ENCODE measurements at regions of chr15 and their contacts with region 1.

Region 1: DNA sequence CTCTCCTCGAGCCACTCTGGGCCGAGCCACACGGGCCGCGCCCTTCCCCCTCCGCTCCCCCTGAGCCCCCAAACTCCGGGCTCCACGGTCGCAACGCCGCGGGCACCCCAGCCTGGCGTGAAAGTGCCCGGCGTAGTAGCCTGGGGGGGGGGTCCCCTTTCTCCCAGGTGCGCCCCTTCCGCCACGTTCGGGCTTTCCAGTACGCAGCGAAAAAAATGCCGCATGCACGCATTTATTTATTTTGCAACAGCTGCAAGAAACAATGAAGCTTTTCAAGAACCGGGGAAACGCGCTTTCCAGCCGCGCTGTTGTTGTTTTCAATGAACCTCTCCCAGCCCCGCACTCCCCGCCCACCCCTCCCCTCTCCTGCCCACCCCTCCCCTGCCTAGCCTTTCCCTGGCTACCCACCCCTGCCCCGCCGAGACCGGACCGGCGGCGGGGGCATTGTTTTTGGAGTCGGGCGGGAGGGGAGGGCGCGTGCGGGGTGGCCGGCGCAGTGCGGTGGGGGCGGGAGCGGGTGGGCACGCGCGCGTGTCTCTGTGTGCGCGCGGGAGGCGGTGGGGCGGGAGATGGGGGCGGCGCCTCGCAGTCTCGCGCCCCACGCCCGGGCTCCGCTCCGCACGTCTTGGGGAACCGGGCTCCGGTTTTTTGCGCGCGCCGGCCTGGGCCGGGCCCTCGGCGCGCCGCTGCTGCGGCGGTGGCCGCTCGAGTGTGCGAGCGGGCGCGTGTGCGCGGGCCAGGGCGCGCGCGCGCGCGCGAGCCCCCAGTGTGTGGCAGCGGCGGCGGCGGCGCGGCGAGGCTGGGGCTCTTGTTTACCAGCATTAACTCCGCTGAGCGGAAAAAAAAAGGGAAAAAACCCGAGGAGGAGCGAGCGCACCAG is at the start of gene IGF1R:
- DNase-seq: peak; percentile 85
- H3K4me3 Mint-ChIP-seq: peak within 1 kb of the TSS; percentile 87
- H3K27ac Mint-ChIP-seq: peak within 1 kb of the TSS; percentile 94
- H3K4me1 Mint-ChIP-seq: peaks cover 25% of the 10 kb centered on the region
- H3K27me3 Mint-ChIP-seq: no peaks in the 10 kb centered on the region
- total RNA-seq, gene IGF1R: 25.6 to 26.6 TPM

Region 2: DNA sequence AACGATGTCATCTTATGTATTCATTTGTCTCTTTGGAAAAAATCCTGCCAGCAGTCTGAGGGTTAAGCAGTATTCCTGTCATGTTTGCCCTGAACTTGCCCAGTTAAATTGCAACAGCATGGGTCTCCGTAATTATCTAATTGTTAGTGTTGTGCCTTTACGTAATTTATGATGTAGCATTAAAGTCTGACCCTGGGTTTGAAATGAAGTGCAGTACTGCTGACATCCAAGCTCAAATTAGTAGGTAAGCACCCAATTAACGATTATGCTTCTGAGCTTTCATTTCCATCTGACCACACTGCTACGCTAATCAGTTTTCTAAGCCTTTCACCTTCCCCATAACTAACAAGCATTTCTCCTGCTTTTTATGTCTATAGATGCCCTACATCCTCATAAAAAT is 445.8 kb before region 1 on chr15:
- CTCF ChIA-PET with region 1: no interaction called
- intact Hi-C with region 1: no loop called
- DNase-seq: no peak
- H3K4me3 Mint-ChIP-seq: no peak overlapping the region
- H3K27ac Mint-ChIP-seq: no peak overlapping the region
- H3K4me1 Mint-ChIP-seq: no peaks in the 10 kb centered on the region
- H3K27me3 Mint-ChIP-seq: peaks cover 7% of the 10 kb centered on the region

Region 3: GRCh38 chr15:98442379-98442833 is 205.6 kb before region 1 on chr15:
- CTCF ChIA-PET with region 1: no interaction called
- intact Hi-C with region 1: loop called (anchors 2 kb)
- DNase-seq: peak; percentile 83
- H3K4me3 Mint-ChIP-seq: no peak overlapping the region
- H3K27ac Mint-ChIP-seq: no peak overlapping the region
- H3K4me1 Mint-ChIP-seq: peaks cover 2% of the 10 kb centered on the region
- H3K27me3 Mint-ChIP-seq: peaks cover 17% of the 10 kb centered on the region

Region 4: DNA sequence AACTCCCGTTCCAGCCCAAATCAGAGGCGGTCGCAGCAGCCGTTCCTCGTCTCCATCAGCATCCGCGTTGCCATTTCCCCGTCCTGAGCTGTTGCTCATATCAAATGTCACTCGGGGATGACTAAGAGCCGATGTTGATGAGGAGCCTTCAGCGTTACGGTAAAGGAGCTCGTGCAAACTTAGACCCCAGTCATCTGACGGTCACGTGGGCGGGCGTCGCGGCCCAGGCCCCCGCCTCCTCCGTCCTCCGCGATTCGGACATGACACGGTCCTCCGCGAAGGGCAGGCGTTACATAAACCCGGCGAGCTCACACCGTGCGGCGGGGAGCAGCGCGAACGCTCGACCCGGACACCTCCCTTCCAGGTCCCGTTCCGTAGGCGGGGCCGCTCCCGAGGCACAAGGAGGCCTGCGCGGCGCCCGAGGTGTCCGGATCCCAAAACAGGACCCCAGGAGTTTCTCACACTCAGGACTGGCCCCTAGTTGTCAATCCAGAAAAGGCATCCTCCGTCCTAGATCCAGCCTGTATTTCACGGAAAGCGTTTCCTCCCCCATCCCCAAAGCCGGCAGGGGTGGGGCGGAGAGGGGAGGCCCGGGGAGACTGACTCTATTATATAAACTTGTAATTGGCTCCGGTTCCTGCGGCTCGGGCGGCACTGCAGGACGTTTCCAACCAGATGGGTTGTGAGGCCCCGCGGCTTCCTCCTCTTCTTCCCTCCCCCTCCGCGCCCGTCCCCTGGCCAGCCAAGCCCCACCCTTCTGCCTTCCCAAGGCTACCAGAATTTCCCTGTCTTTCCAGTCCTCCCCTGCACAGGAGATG is 99.7 kb before region 1 on chr15:
- CTCF ChIA-PET with region 1: interaction called, 3 read pairs
- intact Hi-C with region 1: loop called (anchors 1 kb)
- DNase-seq: peak; percentile 83
- H3K4me3 Mint-ChIP-seq: peak overlapping the region; percentile 90
- H3K27ac Mint-ChIP-seq: peak overlapping the region; percentile 83
- H3K4me1 Mint-ChIP-seq: peaks cover 16% of the 10 kb centered on the region
- H3K27me3 Mint-ChIP-seq: peaks cover 28% of the 10 kb centered on the region

Region 5: DNA sequence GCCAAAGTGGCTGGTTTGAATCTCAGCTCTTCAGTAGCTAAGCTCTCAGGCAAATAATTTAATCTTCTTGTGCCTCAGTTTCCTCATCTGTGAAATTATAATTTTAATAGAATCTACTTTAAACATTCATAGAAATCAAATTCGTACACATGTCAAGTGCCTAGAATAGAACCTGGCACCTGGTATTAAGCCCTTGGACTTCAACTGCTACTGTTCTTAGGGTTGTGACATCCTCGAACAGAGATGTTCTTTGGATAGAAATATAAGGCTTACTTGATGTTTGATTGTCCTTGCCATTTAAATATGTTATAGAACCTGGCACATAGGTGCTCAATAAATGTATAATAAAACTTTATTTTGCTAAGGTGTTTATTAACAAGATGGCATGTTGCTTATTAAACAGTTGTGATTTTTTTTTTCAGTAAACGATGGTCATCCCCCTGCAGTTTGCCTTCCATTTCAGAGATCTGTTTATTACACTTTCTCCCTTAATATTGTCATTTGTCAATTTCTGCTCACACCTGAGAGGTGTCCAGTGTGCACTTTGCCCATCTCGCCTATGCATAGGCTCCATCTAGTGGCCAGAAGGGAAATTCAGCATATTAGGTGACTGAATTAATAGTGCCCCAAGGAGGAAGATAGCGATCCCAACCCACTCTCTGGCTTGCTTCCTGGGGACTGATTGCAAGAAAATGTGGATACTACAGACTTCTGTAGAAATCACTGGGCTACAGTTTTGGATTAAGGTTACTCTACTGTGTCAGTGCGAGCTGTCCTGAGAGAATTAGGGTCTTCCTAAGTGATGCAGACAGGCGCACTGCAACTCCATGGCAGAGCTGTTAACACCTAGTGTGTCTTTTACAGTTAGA is 11.1 kb after region 1 on chr15:
- CTCF ChIA-PET with region 1: interaction called, 7 read pairs
- intact Hi-C with region 1: loop called (anchors 1 kb)
- DNase-seq: peak; percentile 45
- H3K4me3 Mint-ChIP-seq: no peak overlapping the region
- H3K27ac Mint-ChIP-seq: no peak overlapping the region
- H3K4me1 Mint-ChIP-seq: peaks cover 52% of the 10 kb centered on the region
- H3K27me3 Mint-ChIP-seq: no peaks in the 10 kb centered on the region

Region 6: DNA sequence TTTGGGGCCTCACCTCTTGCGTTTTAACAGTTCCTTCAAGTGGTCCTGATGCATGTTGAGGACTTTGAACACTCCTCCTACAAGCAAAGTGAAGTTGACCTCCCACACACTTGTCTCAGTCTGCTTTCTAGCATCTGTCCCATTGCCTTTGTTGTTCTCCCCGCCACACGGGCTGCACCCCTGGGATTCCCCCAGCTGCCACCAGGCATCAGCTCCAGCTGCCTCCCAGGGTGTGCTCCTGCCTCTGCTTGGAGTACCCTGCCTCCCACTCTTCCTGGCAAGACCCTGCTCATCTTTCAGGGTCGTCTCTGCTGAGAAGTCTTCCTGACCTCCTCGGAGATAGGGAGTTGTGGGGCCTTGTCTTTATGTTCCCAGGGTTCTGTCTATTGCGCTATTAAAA is 52.5 kb after region 1 on chr15:
- CTCF ChIA-PET with region 1: no interaction called
- intact Hi-C with region 1: no loop called
- DNase-seq: peak; percentile 24
- H3K4me3 Mint-ChIP-seq: no peak overlapping the region
- H3K27ac Mint-ChIP-seq: no peak overlapping the region
- H3K4me1 Mint-ChIP-seq: peaks cover 62% of the 10 kb centered on the region
- H3K27me3 Mint-ChIP-seq: no peaks in the 10 kb centered on the region

Region 7: DNA sequence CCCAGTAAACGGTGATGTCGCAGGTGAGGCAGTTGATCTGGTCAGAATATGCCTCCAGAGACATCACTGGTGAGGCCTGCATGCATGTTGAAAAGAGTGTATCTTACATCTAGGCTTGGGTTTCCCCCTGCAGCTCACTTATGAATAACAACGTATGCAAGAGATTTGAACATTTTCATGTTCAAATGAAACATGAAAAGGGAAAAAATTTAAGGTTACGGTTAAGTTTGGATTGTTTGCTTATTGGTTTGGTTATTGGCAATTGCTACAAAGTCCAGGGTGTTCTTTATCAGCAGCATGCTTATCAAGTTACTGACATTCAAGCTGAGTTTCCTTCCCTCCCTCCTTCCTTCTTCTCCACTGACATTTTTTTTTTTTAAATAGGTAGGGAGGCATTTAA is 123.5 kb after region 1 on chr15:
- CTCF ChIA-PET with region 1: no interaction called
- intact Hi-C with region 1: loop called (anchors 2 kb)
- DNase-seq: peak; percentile 36
- H3K4me3 Mint-ChIP-seq: no peak overlapping the region
- H3K27ac Mint-ChIP-seq: no peak overlapping the region
- H3K4me1 Mint-ChIP-seq: peaks cover 74% of the 10 kb centered on the region
- H3K27me3 Mint-ChIP-seq: no peaks in the 10 kb centered on the region

Region 8: GRCh38 chr15:99059010-99059981 is 411.3 kb after region 1 on chr15:
- CTCF ChIA-PET with region 1: no interaction called
- intact Hi-C with region 1: loop called (anchors 5 kb)
- DNase-seq: peak; percentile 52
- H3K4me3 Mint-ChIP-seq: peak overlapping the region; percentile 70
- H3K27ac Mint-ChIP-seq: no peak overlapping the region
- H3K4me1 Mint-ChIP-seq: peaks cover 6% of the 10 kb centered on the region
- H3K27me3 Mint-ChIP-seq: peaks cover 33% of the 10 kb centered on the region

Measured in activated naive CD4-positive, alpha-beta T cell treated with anti-CD3 and anti-CD28 coated beads for 36 hours (primary cell).